ENCODE measurements at regions of chr19 and their contacts with region 1.

Region 1: DNA sequence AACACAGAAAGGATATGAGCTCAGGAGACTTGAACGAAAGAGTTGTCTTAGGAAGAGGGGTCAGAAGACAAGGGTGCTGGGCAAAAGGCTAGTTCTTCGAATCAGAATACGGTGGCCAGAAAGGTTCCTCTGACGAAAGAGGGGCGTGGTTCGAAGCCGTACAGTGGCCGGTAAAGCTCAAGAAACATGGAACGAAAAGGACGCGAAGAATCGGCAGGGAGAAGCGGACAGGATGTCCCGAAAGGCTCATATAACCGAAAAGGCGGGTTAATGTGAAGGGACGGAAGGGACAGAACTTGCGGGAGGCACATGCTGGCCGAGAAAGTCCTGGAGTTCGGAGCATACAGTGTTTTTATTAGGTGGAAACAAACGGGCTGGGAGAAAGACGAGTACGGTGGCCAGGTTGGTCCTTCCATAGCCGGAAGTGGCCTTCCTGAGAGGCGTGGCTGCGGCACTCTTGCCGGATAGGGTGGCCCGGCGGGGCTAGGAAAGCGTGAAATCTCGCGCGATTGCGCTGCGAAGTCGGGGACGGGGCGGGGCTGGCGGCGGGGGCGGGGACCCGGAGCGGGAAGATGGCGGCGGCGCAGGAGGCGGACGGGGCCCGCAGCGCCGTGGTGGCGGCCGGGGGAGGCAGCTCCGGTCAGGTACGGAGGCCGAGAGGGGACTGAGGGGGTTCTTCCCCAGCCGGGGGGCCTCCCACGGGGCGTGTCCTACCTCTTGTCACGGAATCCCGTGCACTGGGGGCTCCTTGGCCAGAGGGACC is at the start of gene CLPTM1:
- DNase-seq: peak; percentile 95
- H3K4me3 ChIP-seq: peak within 1 kb of the TSS; percentile 97
- H3K27ac ChIP-seq: peak within 1 kb of the TSS; percentile 95
- H3K27me3 ChIP-seq: no peaks in the 10 kb centered on the region
- CTCF ChIP-seq: no peak
- polyA plus RNA-seq, gene CLPTM1: 51.5 and 63.1 TPM in 2 replicates

Region 2: DNA sequence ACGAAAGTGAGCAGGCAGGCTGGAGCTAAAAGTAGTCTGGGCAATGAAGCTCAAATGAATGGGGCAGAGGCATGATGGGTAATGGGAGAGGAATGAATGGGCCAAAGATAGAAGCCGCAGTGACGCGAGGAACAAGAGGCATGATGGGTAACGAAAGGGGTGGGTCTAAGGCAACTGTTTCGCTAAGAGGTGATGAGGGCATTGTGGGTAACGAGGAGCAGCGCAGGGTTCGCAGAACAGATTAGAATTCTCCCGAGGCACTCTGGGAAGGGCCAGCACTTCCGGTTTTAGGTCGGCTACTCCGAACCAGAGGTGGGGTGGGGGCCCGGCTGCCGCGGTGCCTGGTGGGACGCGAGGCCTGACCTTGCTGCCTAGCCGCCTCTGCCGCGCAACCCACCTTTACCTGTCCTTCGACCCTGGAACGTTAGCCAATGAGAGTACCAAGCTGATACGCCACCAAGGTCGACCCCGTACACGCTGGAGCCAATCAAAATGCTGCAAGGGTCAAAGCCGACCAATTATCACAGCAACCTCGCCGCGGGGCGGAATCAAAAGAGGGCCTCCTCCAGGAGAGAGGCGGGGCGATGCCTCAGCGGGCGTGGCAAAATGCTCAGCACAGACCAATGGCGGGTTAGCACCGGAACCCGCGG is 64.5 kb before region 1 on chr19:
- CTCF ChIA-PET with region 1: interaction called, 4 read pairs
- POLR2A ChIA-PET with region 1: interaction called, 12 read pairs
- DNase-seq: peak; percentile 99
- H3K4me3 ChIP-seq: peak overlapping the region; percentile 65
- H3K27ac ChIP-seq: peak overlapping the region; percentile 96
- H3K27me3 ChIP-seq: no peaks in the 10 kb centered on the region
- CTCF ChIP-seq: no peak

Region 3: GRCh38 chr19:44909775-44910174 is 45.2 kb before region 1 on chr19:
- CTCF ChIA-PET with region 1: interaction called, 101 read pairs
- POLR2A ChIA-PET with region 1: interaction called, 5 read pairs
- DNase-seq: no peak
- H3K4me3 ChIP-seq: no peak overlapping the region
- H3K27ac ChIP-seq: no peak overlapping the region
- H3K27me3 ChIP-seq: peaks cover 9% of the 10 kb centered on the region
- CTCF ChIP-seq: no peak